B cell (primary cell): ENCODE measurements at regions of chr6 and their contacts with region 1.

Region 1: DNA sequence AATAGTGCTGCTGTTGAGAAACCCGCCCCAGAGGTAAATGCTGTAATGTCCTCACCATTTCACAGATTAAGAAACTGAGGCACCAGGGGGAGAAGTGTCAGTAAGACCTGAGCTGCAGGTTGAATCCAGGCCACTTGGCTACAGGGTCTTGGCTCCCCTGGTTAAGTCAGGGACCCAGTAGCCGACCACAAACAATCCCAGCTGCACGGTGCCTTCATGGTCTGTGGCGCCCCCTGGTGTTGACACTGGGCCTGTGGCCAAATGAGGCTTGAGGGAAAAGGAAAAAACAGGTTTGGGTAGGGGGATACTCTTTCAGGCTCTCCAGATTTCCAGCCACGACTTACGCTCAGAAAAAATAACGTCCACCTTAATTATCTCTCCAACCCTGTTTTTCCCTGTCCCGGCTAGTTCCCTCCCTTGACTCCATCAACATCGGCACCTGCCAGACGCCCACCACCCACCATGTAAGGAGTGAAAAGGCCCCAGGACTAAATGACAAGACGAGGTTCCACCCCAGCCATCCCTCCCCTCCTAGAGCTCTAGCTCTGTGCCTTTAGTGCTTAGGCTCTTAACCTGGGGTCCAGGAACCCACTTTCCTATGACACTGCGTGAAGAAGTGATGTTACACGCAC is 47.7 kb upstream of the POLR1H start:
- DNase-seq: peak; percentile 63
- ATAC-seq: peak; percentile 43
- H3K4me3 ChIP-seq: no peak overlapping the region
- H3K4me3 Mint-ChIP-seq: no peak overlapping the region
- H3K27ac ChIP-seq: no peak overlapping the region
- H3K27ac Mint-ChIP-seq: no peak overlapping the region
- H3K4me1 ChIP-seq: peaks cover 0 to 2% of the 10 kb centered on the region in 2 donors
- H3K4me1 Mint-ChIP-seq: no peaks in the 10 kb centered on the region
- H3K27me3 ChIP-seq: peaks cover 0 to 4% (median 0%) of the 10 kb centered on the region in 4 experiments
- H3K27me3 Mint-ChIP-seq: peaks cover 3% of the 10 kb centered on the region
- CTCF ChIP-seq: peak; percentile 79

Region 2: GRCh38 chr6:29853243-29853642 is 160.2 kb before region 1 on chr6:
- CTCF ChIA-PET with region 1: interaction called, 90 read pairs
- POLR2A ChIA-PET with region 1: interaction called, 4 read pairs
- intact Hi-C with region 1: loop called (anchors 1 kb)
- DNase-seq: no peak
- ATAC-seq: no peak
- H3K4me3 ChIP-seq: no peak overlapping the region
- H3K4me3 Mint-ChIP-seq: no peak overlapping the region
- H3K27ac ChIP-seq: no peak overlapping the region
- H3K27ac Mint-ChIP-seq: no peak overlapping the region
- H3K4me1 ChIP-seq: peaks cover 6 to 8% of the 10 kb centered on the region in 2 donors
- H3K4me1 Mint-ChIP-seq: peaks cover 5% of the 10 kb centered on the region
- H3K27me3 ChIP-seq: peaks cover 0 to 46% (median 27%) of the 10 kb centered on the region in 4 experiments
- H3K27me3 Mint-ChIP-seq: peaks cover 71% of the 10 kb centered on the region
- CTCF ChIP-seq: no peak

Region 3: DNA sequence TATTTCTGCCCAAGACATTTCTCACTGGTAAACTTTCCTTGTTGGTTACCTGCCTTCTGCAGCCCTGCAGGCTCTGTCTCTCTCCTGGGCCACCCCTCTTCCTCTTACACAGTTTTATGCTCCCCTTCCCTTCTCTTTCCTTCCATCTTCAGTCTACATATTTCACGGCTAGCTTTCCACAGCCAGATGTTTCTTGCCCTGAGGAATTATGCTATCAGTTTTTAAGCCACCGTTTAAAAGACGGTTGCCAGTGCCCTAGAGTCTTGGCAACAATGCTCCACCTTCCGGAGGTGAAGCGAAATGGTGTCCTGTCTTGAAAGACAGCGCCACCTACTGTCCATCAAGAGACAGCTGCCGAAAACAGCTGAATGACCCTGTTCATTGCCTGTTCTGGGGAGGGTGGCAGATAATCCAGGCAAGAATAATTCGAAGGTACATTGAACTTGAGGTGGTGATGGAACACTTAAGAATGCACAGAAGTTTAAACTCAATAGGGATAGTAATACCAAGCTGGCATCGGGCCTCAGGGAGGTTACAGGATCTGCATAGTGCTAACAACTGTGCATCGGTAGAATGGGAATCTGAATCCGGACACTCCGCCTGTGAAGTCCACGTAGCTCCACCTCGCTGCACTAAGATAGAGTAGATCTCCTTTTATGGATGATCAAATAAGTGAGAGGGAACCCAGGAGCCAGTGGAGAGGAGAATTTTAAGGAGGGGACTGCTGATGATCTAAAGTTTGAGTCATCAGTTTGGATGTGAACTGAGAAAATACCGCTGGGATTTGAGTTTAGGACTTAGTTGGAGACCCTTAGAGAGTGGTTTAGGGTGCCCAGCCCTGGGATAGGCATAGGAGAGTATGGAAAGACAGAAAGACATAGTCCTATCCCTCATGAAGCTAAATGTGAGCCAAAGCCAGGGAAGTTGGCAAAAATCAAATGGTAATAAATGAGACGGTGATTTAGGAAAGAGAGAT is 117.8 kb after region 1 on chr6:
- CTCF ChIA-PET with region 1: interaction called, 6 read pairs
- POLR2A ChIA-PET with region 1: no interaction called
- intact Hi-C with region 1: loop called (anchors 10 kb)
- DNase-seq: peak; percentile 87
- ATAC-seq: peak; percentile 92
- H3K4me3 ChIP-seq: no peak overlapping the region
- H3K4me3 Mint-ChIP-seq: no peak overlapping the region
- H3K27ac ChIP-seq: no peak overlapping the region
- H3K27ac Mint-ChIP-seq: no peak overlapping the region
- H3K4me1 ChIP-seq: peaks cover 13 to 18% of the 10 kb centered on the region in 2 donors
- H3K4me1 Mint-ChIP-seq: peaks cover 12% of the 10 kb centered on the region
- H3K27me3 ChIP-seq: peaks cover 0 to 55% (median 46%) of the 10 kb centered on the region in 4 experiments
- H3K27me3 Mint-ChIP-seq: peaks cover 60% of the 10 kb centered on the region
- CTCF ChIP-seq: peak; percentile 100

Region 4: DNA sequence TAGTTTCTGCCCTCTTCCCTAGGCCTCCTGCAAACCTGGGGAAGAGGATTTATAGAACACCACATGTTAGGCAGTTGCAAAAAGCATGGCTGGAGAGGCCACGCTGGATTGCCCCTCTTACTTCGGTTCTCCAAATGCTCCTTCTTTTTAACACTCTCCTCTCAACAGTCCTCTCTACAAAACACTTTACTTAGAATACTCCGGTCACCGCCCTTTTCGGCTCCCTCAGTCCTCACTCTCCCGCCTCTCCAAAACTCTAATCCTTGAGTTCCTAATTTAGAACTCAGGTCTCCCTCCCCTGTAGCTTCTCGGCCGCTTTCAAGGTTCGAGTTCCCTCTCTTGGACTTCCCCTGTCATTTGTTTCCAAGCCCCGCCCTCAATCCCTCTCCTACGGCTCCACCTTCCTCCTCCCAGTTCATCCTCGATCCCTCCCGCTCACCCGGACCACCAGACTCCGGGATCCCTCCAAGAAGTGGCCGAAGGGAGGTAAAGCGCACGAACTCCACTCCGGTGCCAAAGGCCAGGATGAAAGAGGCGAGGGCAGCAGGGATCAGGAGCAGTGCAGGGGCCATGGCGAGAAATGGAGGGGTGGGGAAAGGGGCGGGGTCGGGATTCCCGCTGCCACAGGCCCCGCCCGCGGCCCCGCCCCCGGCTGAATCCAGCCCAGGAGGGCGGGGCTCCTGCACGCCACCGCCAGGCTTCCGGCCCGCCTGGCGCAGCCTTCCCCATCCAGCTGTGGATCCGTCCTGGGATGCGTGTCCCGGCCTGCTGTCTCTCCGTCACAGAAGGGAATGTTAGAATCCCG is 677.2 kb after region 1 on chr6 and contains the start of gene NRM:
- CTCF ChIA-PET with region 1: no interaction called
- POLR2A ChIA-PET with region 1: no interaction called
- intact Hi-C with region 1: no loop called
- DNase-seq: peak; percentile 80
- ATAC-seq: peak; percentile 24
- H3K4me3 ChIP-seq: peak within 1 kb of the TSS; percentile 65 to 94 (median 79)
- H3K4me3 Mint-ChIP-seq: peak within 1 kb of the TSS; percentile 97
- H3K27ac ChIP-seq: peak within 1 kb of the TSS; percentile 93 to 97
- H3K27ac Mint-ChIP-seq: peak within 1 kb of the TSS; percentile 99
- H3K4me1 ChIP-seq: peaks cover 36 to 43% of the 10 kb centered on the region in 2 donors
- H3K4me1 Mint-ChIP-seq: peaks cover 52% of the 10 kb centered on the region
- H3K27me3 ChIP-seq: no peaks in the 10 kb centered on the region
- H3K27me3 Mint-ChIP-seq: no peaks in the 10 kb centered on the region
- CTCF ChIP-seq: no peak
- total RNA-seq, gene NRM: 22.8 and 24.9 TPM in 2 replicates